Aorta (tissue), 5 donors: ENCODE measurements at regions of chr11 and their contacts with region 1.

Region 1: GRCh38 chr11:62726915-62727763 is at the start of gene HNRNPUL2:
- DNase-seq: peak; percentile 99
- ATAC-seq: peak; percentile 96
- H3K4me3 ChIP-seq: peak within 1 kb of the TSS; percentile 84 to 99
- H3K27ac ChIP-seq: peak within 1 kb of the TSS; percentile 78 to 100
- H3K4me1 ChIP-seq: no peaks in the 10 kb centered on the region
- H3K27me3 ChIP-seq: no peaks in the 10 kb centered on the region
- total RNA-seq, gene HNRNPUL2: 46.9 to 47.2 TPM

Region 2: DNA sequence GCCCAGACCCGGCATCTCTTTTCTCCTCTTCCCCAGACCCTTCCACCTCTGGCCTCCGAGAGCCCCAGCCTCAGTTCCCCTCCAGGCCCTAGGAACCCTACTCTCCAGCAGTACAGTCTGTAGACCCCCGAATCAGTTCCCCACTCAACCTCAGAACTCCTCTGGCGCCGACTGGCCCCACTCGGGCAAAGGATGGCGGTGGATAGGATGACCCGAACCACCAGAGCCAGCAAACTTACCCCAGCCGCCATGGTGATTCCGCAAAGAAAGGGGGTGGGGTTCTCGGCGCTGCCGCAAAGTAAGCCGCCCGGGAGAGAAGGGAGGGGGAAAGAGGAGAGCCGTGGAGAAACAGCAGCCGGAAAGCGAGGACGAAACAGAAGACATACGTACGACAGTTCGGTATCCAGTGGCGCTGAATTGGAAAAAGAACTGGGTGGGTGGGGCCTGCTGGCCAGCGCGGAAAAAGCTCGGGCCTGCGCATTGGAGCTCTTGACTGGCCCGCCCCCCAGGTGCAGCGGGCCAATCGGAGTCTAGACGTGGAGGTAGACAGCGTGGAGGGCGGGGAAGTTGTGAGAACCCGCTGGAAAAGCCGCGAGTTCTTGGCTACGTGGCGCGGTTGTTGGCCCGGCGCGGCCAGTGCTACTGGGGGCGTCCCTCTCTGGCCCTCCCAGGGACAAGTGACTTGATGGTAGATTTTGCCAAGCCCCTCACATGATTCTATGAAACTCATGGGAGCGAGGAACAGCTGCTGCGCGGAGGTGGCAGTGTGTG is 153.4 kb before region 1 on chr11 and contains the start of gene EEF1G:
- intact Hi-C with region 1: no loop called
- DNase-seq: peak; percentile 99
- ATAC-seq: peak; percentile 98
- H3K4me3 ChIP-seq: peak within 1 kb of the TSS; percentile 82 to 92
- H3K27ac ChIP-seq: peak within 1 kb of the TSS; percentile 3 to 90
- H3K4me1 ChIP-seq: no peaks in the 10 kb centered on the region
- H3K27me3 ChIP-seq: no peaks in the 10 kb centered on the region
- total RNA-seq, gene EEF1G: 787 to 987 TPM

Region 3: DNA sequence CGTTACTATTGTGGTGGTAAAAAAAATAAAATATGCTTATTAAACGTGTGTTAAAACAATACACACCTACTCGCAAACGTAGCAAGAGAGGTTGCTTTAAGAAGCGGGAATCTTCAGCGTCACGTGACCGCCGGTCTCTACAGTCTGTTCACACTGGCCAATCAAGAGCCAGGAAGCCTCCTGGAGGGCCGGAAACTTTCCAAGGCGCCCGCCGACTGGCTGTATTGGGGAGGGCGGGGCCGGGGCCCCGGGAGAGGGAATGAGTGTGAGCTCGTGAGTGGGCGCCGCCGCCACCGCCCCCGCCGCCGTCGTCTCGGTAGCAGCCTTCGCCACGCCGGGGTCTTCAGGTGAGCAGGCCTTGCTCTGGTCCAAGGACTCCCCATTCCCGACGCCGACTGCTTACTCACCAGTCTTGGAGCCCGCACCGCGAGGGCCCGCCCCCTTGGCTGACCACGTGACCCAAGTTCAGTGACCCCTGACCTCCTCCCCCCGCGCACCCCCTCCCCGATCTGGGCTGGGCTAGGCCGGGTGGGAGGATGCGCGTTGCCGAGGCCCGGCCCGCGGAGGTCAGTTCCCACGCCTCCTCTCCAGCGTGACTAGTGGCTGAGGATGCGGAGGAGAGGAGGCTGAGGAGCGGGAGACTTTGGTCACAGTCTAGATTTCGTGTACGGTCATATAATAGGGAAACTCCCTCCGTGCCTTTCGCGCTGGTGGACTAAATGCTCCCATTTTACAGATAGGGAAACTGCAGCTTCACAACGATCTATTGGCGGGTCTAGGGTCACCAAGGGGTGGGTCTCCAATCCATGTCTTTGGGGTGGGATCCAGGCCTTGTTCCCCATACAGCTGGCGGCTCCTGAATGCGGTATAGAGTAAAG is 44.2 kb after region 1 on chr11 and contains the start of gene TAF6L:
- intact Hi-C with region 1: loop called in 1 of 2 experiments (anchors 5 kb)
- DNase-seq: peak; percentile 99
- ATAC-seq: peak; percentile 99
- H3K4me3 ChIP-seq: peak within 1 kb of the TSS; percentile 38 to 72
- H3K27ac ChIP-seq: peak within 1 kb of the TSS; percentile 31 to 98
- H3K4me1 ChIP-seq: no peaks in the 10 kb centered on the region
- H3K27me3 ChIP-seq: no peaks in the 10 kb centered on the region
- total RNA-seq, gene TAF6L: 13.2 to 21.3 TPM